GM10248 (cell line): ENCODE measurements at regions of chr13 and their contacts with region 1.

Region 1: GRCh38 chr13:42894765-42895243 is 97.2 kb downstream of the EPSTI1 start:
- DNase-seq: no peak
- CTCF ChIP-seq: no peak

Region 2: GRCh38 chr13:42728507-42729180 is 166.2 kb before region 1 on chr13:
- CTCF ChIA-PET with region 1: no interaction called
- POLR2A ChIA-PET with region 1: no interaction called
- DNase-seq: no peak
- CTCF ChIP-seq: no peak

Region 3: GRCh38 chr13:42883771-42884467 is 10.9 kb before region 1 on chr13:
- CTCF ChIA-PET with region 1: interaction called, 12 read pairs
- POLR2A ChIA-PET with region 1: no interaction called
- DNase-seq: no peak
- CTCF ChIP-seq: no peak